ENCODE measurements at regions of chr3 and their contacts with region 1.

Region 1: DNA sequence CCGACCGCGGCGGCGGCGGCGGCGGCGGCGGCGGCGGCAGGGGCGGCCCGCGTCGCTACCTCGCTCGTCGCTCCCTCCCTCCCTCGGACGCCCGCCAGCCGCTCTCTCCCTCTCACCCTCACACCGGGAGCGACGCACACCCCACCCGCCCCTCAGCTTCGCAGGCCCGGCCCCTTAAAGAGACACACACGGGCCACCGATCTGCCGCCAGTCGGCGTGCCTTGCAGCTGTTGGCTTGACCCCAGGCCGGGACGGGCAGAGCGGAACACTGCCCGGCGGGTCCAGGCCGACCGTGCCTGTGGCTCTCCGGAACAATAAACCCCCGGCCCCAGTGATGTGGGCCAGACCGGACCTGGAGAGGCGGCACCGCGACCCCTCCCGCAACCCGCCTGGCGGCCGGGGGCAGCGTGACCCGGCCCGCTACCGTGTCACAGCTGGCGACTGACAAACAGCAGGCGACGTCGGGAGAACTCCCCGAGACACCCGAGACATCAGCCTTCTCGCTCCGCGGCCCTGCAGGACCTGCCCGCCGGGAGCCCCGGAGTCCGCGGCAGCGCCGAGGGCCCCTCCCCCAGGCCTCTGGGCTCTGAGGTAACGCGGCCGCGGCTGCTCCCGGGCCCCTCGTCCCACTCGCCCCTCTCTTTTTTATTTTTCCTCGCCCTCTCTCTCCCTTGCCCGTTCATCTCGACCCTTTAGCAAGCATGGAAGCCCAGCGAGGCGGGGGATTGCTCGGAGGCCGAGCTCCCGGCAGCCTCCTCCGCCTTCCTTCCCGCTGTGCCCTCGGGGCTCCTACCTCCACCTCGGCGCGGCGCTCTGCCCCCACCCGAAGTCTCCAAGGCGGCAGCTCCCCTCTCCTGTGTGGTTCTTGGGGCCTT is at the start of gene SETD2:
- DNase-seq: peak; percentile 95 to 97
- ATAC-seq: peak; percentile 82 to 88
- H3K4me3 ChIP-seq: peak within 1 kb of the TSS; percentile 83 to 95 (median 88)
- H3K27ac ChIP-seq: peak within 1 kb of the TSS; percentile 96 to 99 (median 97)
- H3K4me1 ChIP-seq: peaks cover 51% of the 10 kb centered on the region in 2 donors
- H3K27me3 ChIP-seq: no peaks in the 10 kb centered on the region
- CTCF ChIP-seq: peak; percentile 18 to 62 (median 49)
- POLR2A ChIP-seq: peak; percentile 76 to 87
- total RNA-seq, gene SETD2: 35.7 to 48.5 (median 40.4) TPM

Region 2: DNA sequence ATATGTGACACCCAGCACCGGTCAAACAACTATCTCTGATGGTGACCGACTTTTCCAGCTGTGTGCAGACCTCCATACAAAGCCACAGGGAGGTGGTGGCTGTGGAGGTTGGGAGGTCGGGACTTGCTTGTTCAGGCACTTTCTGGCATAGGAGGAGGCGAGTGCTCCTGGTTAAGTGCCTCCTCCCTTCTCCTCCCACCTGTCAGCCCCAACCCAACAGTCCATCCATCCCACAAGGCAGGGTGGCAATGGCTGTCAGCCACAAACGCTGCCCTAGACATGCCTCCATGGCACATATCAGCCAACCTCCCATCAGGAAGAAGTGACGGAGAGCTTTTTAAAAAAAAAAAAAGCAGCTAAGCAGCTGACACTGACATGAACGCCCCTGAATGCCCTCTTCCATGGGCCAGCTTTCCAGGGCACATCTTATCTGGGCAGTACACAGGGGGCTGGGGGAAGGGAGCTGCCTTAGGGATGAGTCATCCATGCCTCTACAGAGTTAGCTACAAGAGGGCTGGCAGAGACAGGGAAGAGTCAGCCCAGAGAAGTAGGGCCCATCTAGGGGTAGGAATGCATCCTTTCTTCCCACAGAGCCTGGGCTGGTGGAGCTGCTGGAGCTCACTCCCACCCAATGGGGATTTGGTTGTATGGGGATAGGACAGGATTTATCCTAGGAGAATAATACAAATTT is 228.9 kb before region 1 on chr3:
- in situ Hi-C with region 1: no loop called
- intact Hi-C with region 1: loop called (anchors 10 kb)
- DNase-seq: peak; percentile 94 to 99
- ATAC-seq: peak; percentile 92 to 94
- H3K4me3 ChIP-seq: no peak overlapping the region
- H3K27ac ChIP-seq: peak overlapping the region; percentile 90 to 96 (median 92)
- H3K4me1 ChIP-seq: peaks cover 89 to 90% of the 10 kb centered on the region in 2 donors
- H3K27me3 ChIP-seq: no peaks in the 10 kb centered on the region
- CTCF ChIP-seq: peak; percentile 63 to 88 (median 69)
- POLR2A ChIP-seq: peak; percentile 14 to 41

Region 3: GRCh38 chr3:47009225-47010110 is 154.8 kb before region 1 on chr3:
- in situ Hi-C with region 1: no loop called
- intact Hi-C with region 1: no loop called
- DNase-seq: peak; percentile 74 to 90
- ATAC-seq: peak; percentile 75 to 79
- H3K4me3 ChIP-seq: peak overlapping the region; percentile 55 to 71 (median 66)
- H3K27ac ChIP-seq: peak overlapping the region; percentile 85 to 88 (median 86)
- H3K4me1 ChIP-seq: peaks cover 4 to 18% of the 10 kb centered on the region in 2 donors
- H3K27me3 ChIP-seq: no peaks in the 10 kb centered on the region
- CTCF ChIP-seq: no peak
- POLR2A ChIP-seq: peak; percentile 86 to 89

Region 4: DNA sequence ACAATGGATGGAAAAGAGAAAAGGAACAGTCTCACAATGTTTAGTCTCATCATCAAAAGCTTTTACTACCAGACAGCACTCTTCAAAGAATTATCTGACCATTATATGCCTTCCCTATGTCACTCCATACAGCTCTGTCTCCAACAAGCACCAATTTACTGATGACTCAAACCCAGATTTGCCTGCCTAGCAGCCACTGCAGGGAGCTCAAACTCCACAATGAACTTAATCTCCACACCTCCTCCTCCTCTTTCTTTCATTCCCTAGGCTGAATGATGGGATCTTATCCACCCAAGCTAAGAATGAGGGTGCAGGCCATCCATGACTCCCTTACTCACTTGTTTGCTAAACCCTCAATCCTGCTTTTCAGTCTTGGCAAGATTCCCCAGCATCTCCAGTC is 139.3 kb before region 1 on chr3:
- in situ Hi-C with region 1: no loop called
- intact Hi-C with region 1: no loop called
- DNase-seq: no peak
- ATAC-seq: no peak
- H3K4me3 ChIP-seq: no peak overlapping the region
- H3K27ac ChIP-seq: peak overlapping the region in 2 of 4 donors; percentile 72 to 88
- H3K4me1 ChIP-seq: peaks cover 31 to 38% of the 10 kb centered on the region in 2 donors
- H3K27me3 ChIP-seq: no peaks in the 10 kb centered on the region
- CTCF ChIP-seq: no peak
- POLR2A ChIP-seq: no peak

Region 5: GRCh38 chr3:47035634-47036033 is 128.6 kb before region 1 on chr3:
- in situ Hi-C with region 1: no loop called
- intact Hi-C with region 1: loop called (anchors 5 kb)
- DNase-seq: no peak
- ATAC-seq: no peak
- H3K4me3 ChIP-seq: no peak overlapping the region
- H3K27ac ChIP-seq: peak overlapping the region; percentile 58 to 77 (median 71)
- H3K4me1 ChIP-seq: peaks cover 8 to 21% of the 10 kb centered on the region in 2 donors
- H3K27me3 ChIP-seq: no peaks in the 10 kb centered on the region
- CTCF ChIP-seq: no peak
- POLR2A ChIP-seq: no peak

Region 6: DNA sequence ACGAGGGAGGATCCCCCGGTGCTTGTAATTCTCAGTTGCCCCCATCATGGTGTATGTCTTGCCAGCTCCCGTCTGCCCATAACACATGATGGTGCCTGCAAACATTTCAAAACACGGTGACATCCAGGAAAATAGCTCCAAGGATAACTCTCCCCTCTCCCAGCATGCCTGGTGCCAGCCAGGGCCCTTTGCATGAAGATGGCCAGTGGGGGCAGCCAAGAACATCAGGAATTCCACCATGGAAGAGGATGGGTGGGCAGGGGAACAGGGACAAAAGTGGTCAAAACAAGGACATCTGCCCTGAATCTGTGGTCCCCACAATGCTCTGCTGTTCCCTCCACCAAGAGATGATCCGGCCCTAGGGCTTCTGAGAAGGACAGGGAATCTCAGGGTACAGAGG is 109.3 kb after region 1 on chr3:
- in situ Hi-C with region 1: no loop called
- intact Hi-C with region 1: no loop called
- DNase-seq: no peak
- ATAC-seq: no peak
- H3K4me3 ChIP-seq: no peak overlapping the region
- H3K27ac ChIP-seq: no peak overlapping the region
- H3K4me1 ChIP-seq: no peaks in the 10 kb centered on the region
- H3K27me3 ChIP-seq: no peaks in the 10 kb centered on the region
- CTCF ChIP-seq: no peak
- POLR2A ChIP-seq: no peak

Region 7: DNA sequence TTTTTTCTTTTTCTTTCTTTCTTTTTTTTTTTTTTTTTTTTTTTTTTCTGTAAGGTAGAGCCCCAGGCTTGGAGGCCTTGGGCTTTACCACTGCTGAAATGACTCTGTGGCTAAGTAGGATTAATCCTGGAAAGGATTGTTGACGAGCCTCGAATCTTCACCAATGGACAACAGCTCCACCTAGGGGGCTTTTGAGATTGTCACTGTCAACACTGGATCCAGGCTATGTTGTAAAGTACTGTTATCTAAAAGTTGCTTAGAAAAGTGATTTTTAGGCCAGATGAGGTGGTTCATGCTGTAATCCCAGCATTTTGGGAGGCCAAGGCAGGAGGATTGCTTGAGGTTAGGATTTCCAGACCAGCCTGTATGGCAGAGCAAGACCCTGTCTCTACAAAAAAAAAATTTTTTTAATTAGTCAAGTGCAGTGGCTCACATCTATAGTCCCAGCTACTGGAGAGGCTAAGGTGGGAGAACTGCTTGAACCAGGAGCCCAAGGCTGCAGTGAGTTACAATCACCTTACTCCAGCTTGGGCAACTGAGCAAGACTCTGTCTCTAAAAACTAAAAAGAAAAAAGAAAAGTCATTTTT is 160.1 kb after region 1 on chr3:
- in situ Hi-C with region 1: no loop called
- intact Hi-C with region 1: loop called (anchors 10 kb)
- DNase-seq: peak; percentile 16 to 42
- ATAC-seq: peak; percentile 94 to 99
- H3K4me3 ChIP-seq: no peak overlapping the region
- H3K27ac ChIP-seq: no peak overlapping the region
- H3K4me1 ChIP-seq: no peaks in the 10 kb centered on the region
- H3K27me3 ChIP-seq: no peaks in the 10 kb centered on the region
- CTCF ChIP-seq: peak; percentile 36 to 77 (median 64)
- POLR2A ChIP-seq: no peak

Region 8: GRCh38 chr3:48439820-48440589 is 1275.8 kb after region 1 on chr3 and contains the starts of genes CCDC51 and TMA7:
- in situ Hi-C with region 1: no loop called
- intact Hi-C with region 1: loop called (anchors 10 kb)
- DNase-seq: peak; percentile 98
- ATAC-seq: peak; percentile 96 to 97
- H3K4me3 ChIP-seq: peak within 1 kb of the TSS; percentile 74 to 95 (median 92)
- H3K27ac ChIP-seq: peak within 1 kb of the TSS; percentile 85 to 96 (median 94)
- H3K4me1 ChIP-seq: peaks cover 21 to 24% of the 10 kb centered on the region in 2 donors
- H3K27me3 ChIP-seq: no peaks in the 10 kb centered on the region
- CTCF ChIP-seq: no peak
- POLR2A ChIP-seq: peak; percentile 84 to 95
- total RNA-seq, gene CCDC51: 4.9 to 12.2 (median 9.9) TPM
- total RNA-seq, gene TMA7: 202 to 353 (median 294) TPM